Activated T-helper 1 cell treated with anti-CD3 and anti-CD28 coated beads, Interleukin-12 subunit alpha, Interleukin-12 subunit beta, Interleukin-2, Interleukin-4 antibody, amounts not matched to agents 30 ng/mL and 10 ng/mL and 1 ng/mL, durations not matched to agents 14 hours and 24 hours and 36 hours (primary cell): ENCODE measurements at regions of chr13 and their contacts with region 1.

Region 1: GRCh38 chr13:40109356-40109844 is 453.9 kb downstream of the COG6 start:
- DNase-seq: no peak
- H3K4me3 Mint-ChIP-seq: no peak overlapping the region
- H3K27ac Mint-ChIP-seq: peak overlapping the region; percentile 31
- H3K4me1 Mint-ChIP-seq: peaks cover 47% of the 10 kb centered on the region
- H3K27me3 Mint-ChIP-seq: no peaks in the 10 kb centered on the region

Region 2: GRCh38 chr13:40221460-40222201 is 112.2 kb after region 1 on chr13:
- intact Hi-C with region 1: loop called (anchors 1 kb)
- DNase-seq: no peak
- H3K4me3 Mint-ChIP-seq: peak overlapping the region; percentile 37
- H3K27ac Mint-ChIP-seq: peak overlapping the region; percentile 69
- H3K4me1 Mint-ChIP-seq: peaks cover 43% of the 10 kb centered on the region
- H3K27me3 Mint-ChIP-seq: no peaks in the 10 kb centered on the region